ENCODE measurements at regions of chr17 and their contacts with region 1.

Region 1: DNA sequence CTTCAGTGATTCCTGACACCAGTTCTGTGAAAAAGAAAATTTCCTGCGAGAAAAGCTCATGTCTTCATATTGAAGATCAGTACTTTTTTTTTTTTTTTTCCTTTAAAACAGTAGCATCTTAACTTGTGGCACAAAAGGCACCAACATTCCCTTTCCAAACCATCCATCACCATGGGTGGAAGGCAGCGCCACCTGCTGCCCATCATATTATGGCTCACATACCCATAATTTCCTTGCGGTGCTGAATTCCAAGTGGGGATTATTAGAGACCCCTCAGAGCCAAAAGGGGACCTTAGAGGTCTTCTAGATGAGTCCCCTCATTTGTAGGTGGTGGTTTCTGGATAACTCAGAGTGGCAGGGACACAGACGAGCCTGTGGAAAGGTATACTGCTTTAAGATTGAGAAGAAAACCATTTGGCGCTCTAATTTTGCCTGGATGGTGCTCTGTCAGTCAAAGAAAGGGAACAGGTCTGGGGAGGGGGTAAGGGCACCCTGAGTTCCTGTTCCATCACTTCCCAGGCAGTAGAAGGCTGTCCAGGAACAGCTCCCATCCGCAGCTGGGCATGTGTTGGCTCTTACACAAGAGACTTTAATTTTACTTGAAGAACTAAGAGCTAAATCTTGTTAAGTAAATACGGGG is 7.9 kb upstream of the SOST start:
- DNase-seq: peak; percentile 58
- ATAC-seq: peak; percentile 40; the same call in 2 of the 3 replicates
- H3K4me3 ChIP-seq: no peak overlapping the region
- H3K27ac ChIP-seq: no peak overlapping the region
- H3K4me1 ChIP-seq: peaks cover 6% of the 10 kb centered on the region
- H3K27me3 ChIP-seq: no peaks in the 10 kb centered on the region
- CTCF ChIP-seq: peak; percentile 85
- EP300 ChIP-seq: no peak
- POLR2A ChIP-seq: no peak
- RAD21 ChIP-seq: no peak

Region 2: DNA sequence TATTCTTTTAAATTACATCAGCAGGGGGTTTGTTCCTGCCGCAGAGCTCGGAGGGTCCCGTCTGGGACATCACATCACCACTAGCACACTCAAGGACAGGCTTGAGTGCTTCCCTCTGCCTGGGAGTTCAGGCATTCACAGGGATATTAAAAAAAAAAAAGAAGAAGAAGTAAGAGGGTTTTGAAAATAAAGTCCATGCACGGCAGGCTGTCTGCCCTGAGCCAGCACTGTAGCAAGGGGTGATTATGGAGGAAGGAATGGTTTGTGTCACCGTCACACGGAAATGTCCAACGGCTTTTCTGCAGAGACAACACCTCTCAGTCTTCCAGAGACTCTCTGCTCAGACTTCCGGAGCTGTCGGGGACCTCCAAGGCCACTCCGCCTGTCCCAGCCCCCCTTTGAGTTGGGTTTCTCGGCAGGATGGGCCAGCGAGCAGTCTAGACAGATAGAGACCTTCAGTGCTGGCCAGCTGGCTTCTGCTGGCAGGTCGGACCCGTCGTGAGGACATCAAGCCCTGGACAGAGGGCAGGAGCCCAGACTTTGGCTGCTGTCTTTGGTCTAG is 138.4 kb before region 1 on chr17:
- CTCF ChIA-PET with region 1: no interaction called
- POLR2A ChIA-PET with region 1: no interaction called
- in situ Hi-C with region 1: no loop called
- intact Hi-C with region 1: no loop called
- DNase-seq: no peak
- ATAC-seq: peak; percentile 64
- H3K4me3 ChIP-seq: peak overlapping the region; percentile 11 to 56 (median 36); a peak in 5 of 6 replicates
- H3K27ac ChIP-seq: no peak overlapping the region
- H3K4me1 ChIP-seq: peaks cover 40% of the 10 kb centered on the region
- H3K27me3 ChIP-seq: peaks cover 5 to 13% of the 10 kb centered on the region in 2 experiments; a peak in 2 of 5 replicates
- CTCF ChIP-seq: no peak
- EP300 ChIP-seq: no peak
- POLR2A ChIP-seq: no peak
- RAD21 ChIP-seq: no peak

Region 3: GRCh38 chr17:43694077-43694870 is 72.3 kb before region 1 on chr17:
- CTCF ChIA-PET with region 1: interaction called, 373 read pairs
- POLR2A ChIA-PET with region 1: no interaction called
- in situ Hi-C with region 1: loop called (anchors 5 kb)
- intact Hi-C with region 1: no loop called
- DNase-seq: peak; percentile 85
- ATAC-seq: peak; percentile 86
- H3K4me3 ChIP-seq: no peak overlapping the region
- H3K27ac ChIP-seq: no peak overlapping the region
- H3K4me1 ChIP-seq: peaks cover 33% of the 10 kb centered on the region
- H3K27me3 ChIP-seq: peaks cover 11 to 31% of the 10 kb centered on the region in 2 experiments
- CTCF ChIP-seq: peak; percentile 96
- EP300 ChIP-seq: no peak
- POLR2A ChIP-seq: no peak
- RAD21 ChIP-seq: peak; percentile 98

Region 4: DNA sequence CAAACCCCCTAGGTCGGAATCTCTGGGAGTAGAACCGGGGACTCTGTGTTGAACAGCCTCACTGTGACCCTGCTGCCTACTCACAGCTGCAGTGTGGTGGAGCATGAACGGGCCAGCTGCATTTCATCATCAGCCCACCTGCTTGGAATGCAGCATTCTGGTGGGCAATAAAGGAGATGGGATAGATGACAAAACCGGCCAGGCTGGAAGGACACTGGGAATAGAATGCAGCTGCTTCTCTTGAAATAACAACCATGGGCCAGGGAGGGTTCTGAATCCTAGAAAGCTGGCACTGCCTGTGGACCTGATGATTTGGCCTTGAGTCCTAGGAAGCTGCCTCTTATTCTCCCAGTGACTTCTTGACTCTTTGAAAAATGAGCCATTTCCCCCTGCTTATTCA is 37.2 kb after region 1 on chr17:
- CTCF ChIA-PET with region 1: no interaction called
- POLR2A ChIA-PET with region 1: no interaction called
- in situ Hi-C with region 1: no loop called
- intact Hi-C with region 1: no loop called
- DNase-seq: peak; percentile 24
- ATAC-seq: no peak
- H3K4me3 ChIP-seq: no peak overlapping the region
- H3K27ac ChIP-seq: no peak overlapping the region
- H3K4me1 ChIP-seq: peaks cover 41% of the 10 kb centered on the region
- H3K27me3 ChIP-seq: 0 out of 5 replicates have a peak, but pooled peaks cover 0 to 10% of the 10 kb centered on the region in 2 experiments
- CTCF ChIP-seq: no peak
- EP300 ChIP-seq: no peak
- POLR2A ChIP-seq: no peak
- RAD21 ChIP-seq: no peak

Region 5: DNA sequence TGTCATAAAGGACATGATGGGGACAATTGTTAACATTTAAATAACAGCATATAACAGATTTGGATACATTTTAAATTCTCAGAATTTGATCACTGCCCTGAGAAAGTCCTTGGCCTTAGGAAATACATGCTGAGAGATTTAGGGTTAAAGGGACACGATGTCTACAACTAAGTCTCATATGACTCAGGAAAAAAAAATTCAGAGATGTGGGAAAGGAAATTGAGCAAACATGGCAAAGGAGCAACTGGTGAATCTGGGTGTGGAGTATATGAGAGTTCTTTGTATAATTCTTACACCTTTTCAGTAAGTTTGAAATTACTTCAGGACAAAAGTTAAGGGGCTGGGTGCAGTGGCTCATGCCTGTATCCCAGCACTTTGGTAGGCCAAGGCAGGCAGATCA is 48.2 kb after region 1 on chr17:
- CTCF ChIA-PET with region 1: no interaction called
- POLR2A ChIA-PET with region 1: no interaction called
- in situ Hi-C with region 1: no loop called
- intact Hi-C with region 1: no loop called
- DNase-seq: no peak
- ATAC-seq: no peak
- H3K4me3 ChIP-seq: no peak overlapping the region
- H3K27ac ChIP-seq: no peak overlapping the region
- H3K4me1 ChIP-seq: no peaks in the 10 kb centered on the region
- H3K27me3 ChIP-seq: no peaks in the 10 kb centered on the region
- CTCF ChIP-seq: no peak
- EP300 ChIP-seq: no peak
- POLR2A ChIP-seq: no peak
- RAD21 ChIP-seq: no peak